Endothelial cell of umbilical vein (primary cell): ENCODE measurements at regions of chr10 and their contacts with region 1.

Region 1: DNA sequence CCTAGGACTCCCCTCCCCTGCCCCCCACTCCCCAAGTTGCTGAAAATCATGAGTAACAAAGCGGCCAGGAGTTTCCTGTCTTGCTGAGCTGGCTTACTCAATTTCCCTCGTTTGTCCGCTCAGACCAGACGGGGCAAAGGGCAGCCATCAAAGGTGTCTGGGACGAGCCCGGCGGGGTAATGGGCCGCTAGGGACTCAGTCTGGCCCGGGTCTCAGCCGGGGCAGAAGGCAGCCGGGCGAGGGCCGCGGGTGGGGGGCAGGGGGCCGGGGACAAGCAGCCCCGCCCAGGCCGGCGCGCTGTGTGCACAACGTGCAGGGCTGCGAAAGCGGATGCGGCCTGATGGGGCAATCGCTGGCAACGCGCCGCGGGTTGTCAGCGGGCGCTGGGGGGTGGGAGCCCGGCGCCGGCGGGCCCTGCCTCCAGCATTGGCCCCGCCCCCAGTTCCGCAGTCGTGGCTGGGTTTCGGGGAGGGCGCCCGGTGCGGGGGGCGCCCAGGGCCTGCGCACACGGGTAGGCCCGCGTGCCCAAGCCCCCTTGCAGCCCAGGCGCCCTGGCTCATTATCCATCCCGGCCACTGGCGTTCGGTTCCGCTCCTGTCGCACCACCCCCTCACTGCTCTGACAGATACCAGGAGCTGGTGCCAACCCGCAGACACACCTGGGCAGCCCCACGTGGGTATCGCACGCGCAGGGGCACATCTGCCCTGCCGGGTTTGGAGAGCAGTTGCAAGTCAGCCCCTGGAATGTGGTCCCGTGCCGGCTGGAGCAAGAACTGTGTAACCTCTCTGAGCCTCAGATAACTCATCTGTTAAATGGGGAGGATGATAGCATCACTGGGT is 35.1 kb downstream of the DNAJB12 start:
- DNase-seq: peak; percentile 98
- H3K4me3 ChIP-seq: no peak overlapping the region
- H3K27ac ChIP-seq: peak overlapping the region; percentile 100
- H3K4me1 ChIP-seq: peaks cover 69% of the 10 kb centered on the region
- H3K27me3 ChIP-seq: no peaks in the 10 kb centered on the region
- CTCF ChIP-seq: no peak
- POLR2A ChIP-seq: no peak

Region 2: GRCh38 chr10:72215652-72216549 is 103.7 kb before region 1 on chr10 and contains the starts of genes ANAPC16 and ASCC1:
- CTCF ChIA-PET with region 1: interaction called, 3 read pairs
- POLR2A ChIA-PET with region 1: no interaction called
- dilution Hi-C with region 1: no loop called
- intact Hi-C with region 1: loop called (anchors 1 kb)
- DNase-seq: peak; percentile 95
- H3K4me3 ChIP-seq: peak within 1 kb of the TSS; percentile 72 to 94 (median 84)
- H3K27ac ChIP-seq: peak within 1 kb of the TSS; percentile 85
- H3K4me1 ChIP-seq: peaks cover 4% of the 10 kb centered on the region
- H3K27me3 ChIP-seq: no peaks in the 10 kb centered on the region
- CTCF ChIP-seq: no peak
- POLR2A ChIP-seq: peak; percentile 94
- total RNA-seq, gene ANAPC16: 44.2 and 44.4 TPM in 2 replicates
- total RNA-seq, gene ASCC1: 24.9 and 28.2 TPM in 2 replicates

Region 3: GRCh38 chr10:72248468-72249151 is 71.0 kb before region 1 on chr10:
- CTCF ChIA-PET with region 1: no interaction called
- POLR2A ChIA-PET with region 1: no interaction called
- dilution Hi-C with region 1: no loop called
- intact Hi-C with region 1: loop called (anchors 2 kb)
- DNase-seq: peak; percentile 91
- H3K4me3 ChIP-seq: no peak overlapping the region
- H3K27ac ChIP-seq: peak overlapping the region; percentile 89
- H3K4me1 ChIP-seq: peaks cover 39% of the 10 kb centered on the region
- H3K27me3 ChIP-seq: no peaks in the 10 kb centered on the region
- CTCF ChIP-seq: no peak
- POLR2A ChIP-seq: no peak

Region 4: GRCh38 chr10:72308320-72308987 is 11.2 kb before region 1 on chr10:
- CTCF ChIA-PET with region 1: interaction called, 4 read pairs
- POLR2A ChIA-PET with region 1: interaction called, 4 read pairs
- dilution Hi-C with region 1: no loop called
- intact Hi-C with region 1: loop called (anchors 1 kb)
- DNase-seq: peak; percentile 74
- H3K4me3 ChIP-seq: no peak overlapping the region
- H3K27ac ChIP-seq: peak overlapping the region; percentile 47
- H3K4me1 ChIP-seq: peaks cover 28% of the 10 kb centered on the region
- H3K27me3 ChIP-seq: no peaks in the 10 kb centered on the region
- CTCF ChIP-seq: no peak
- POLR2A ChIP-seq: no peak

Region 5: DNA sequence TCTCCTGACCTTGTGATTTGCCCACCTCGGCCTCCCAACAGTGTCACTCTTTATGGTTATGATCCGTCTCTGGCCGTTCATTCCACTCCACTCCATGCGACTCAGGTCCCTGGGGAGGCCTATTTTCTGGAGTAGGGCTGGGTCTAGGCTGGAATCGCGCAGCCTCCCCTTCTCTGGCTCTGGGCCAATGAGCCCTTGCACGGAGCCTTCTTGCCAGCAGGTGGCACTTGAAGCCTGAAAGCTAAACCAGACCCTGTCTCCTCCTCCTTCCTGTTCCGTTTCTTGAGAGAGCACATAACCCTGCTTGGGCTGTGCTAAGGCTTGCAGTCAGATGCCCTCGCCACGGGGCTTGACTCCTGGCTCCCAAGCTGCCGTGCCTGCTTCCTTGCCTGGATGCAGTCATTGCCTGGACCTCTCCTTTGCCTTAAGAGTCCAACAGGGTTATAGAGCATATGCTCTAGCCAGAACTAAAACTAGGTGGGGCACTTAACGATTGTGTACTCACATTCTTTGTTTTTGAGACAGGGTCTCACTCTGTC is 44.7 kb after region 1 on chr10:
- CTCF ChIA-PET with region 1: no interaction called
- POLR2A ChIA-PET with region 1: no interaction called
- dilution Hi-C with region 1: no loop called
- intact Hi-C with region 1: no loop called
- DNase-seq: peak; percentile 87
- H3K4me3 ChIP-seq: no peak overlapping the region
- H3K27ac ChIP-seq: peak overlapping the region; percentile 4
- H3K4me1 ChIP-seq: peaks cover 4% of the 10 kb centered on the region
- H3K27me3 ChIP-seq: no peaks in the 10 kb centered on the region
- CTCF ChIP-seq: peak; percentile 89 to 95
- POLR2A ChIP-seq: peak; percentile 74

Region 6: GRCh38 chr10:73837072-73837471 is 1517.4 kb after region 1 on chr10:
- CTCF ChIA-PET with region 1: no interaction called
- POLR2A ChIA-PET with region 1: no interaction called
- dilution Hi-C with region 1: no loop called
- intact Hi-C with region 1: no loop called
- DNase-seq: peak; percentile 83
- H3K4me3 ChIP-seq: no peak overlapping the region
- H3K27ac ChIP-seq: peak overlapping the region; percentile 34
- H3K4me1 ChIP-seq: peaks cover 30% of the 10 kb centered on the region
- H3K27me3 ChIP-seq: no peaks in the 10 kb centered on the region
- CTCF ChIP-seq: no peak
- POLR2A ChIP-seq: no peak